Lower leg skin (tissue), 4 donors: ENCODE measurements at regions of chr20 and their contacts with region 1.

Region 1: GRCh38 chr20:43187476-43188233 is 2.1 kb downstream of the PTPRT start:
- DNase-seq: peak; percentile 65 to 95
- H3K4me3 ChIP-seq: no peak overlapping the region
- CTCF ChIP-seq: peak in 1 of 3 donors; percentile 24
- POLR2A ChIP-seq: no peak

Region 2: GRCh38 chr20:41738604-41739206 is 1449.0 kb before region 1 on chr20:
- intact Hi-C with region 1: loop called (anchors 5 kb)
- DNase-seq: peak in 1 of 2 donors; percentile 76
- H3K4me3 ChIP-seq: no peak overlapping the region
- CTCF ChIP-seq: peak in 1 of 3 donors; percentile 61
- POLR2A ChIP-seq: no peak

Region 3: DNA sequence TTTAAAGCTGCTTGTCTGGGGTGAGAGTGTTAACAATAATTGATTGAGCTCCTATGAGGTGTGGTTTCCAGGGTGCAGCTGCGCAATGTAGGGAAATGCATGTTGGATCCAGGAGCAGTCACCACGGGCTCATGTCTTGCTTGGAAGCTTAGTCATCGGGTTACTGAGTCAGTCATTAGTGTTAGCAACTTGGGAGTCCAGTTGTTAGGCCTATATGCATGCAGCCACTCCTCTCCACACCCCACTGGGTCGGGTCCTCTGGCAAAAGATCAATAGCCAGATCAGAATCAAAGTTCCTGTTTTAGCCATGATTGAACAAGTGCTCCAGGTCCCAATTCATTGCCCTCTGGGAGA is 1297.8 kb before region 1 on chr20:
- intact Hi-C with region 1: loop called (anchors 10 kb)
- DNase-seq: peak in 1 of 2 donors; percentile 29
- H3K4me3 ChIP-seq: no peak overlapping the region
- CTCF ChIP-seq: no peak
- POLR2A ChIP-seq: no peak

Region 4: DNA sequence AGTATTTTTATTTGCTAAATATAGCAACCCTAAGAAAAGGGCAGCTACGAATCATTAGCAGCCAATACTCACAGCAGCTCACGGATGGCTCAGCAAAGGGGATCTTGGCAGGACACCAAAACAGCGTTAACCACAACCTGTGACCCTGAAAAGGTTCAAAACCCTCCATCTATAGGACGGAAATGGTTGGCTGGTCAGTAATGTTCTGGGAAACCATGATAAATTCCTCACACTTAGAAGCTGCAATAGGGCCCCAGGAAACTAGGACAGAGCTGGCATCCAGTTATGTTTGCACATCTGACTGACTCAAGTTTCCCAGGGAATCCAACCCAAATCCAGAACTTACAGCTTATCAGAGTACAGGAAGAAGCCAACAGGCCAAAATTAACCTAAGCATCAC is 33.0 kb after region 1 on chr20:
- intact Hi-C with region 1: no loop called
- DNase-seq: no peak
- H3K4me3 ChIP-seq: no peak overlapping the region
- CTCF ChIP-seq: no peak
- POLR2A ChIP-seq: no peak